ENCODE measurements at regions of chr10 and their contacts with region 1.

Region 1: GRCh38 chr10:59808896-59809643 is 55.8 kb upstream of the MRLN start:
- DNase-seq: peak; percentile 58 to 80 (median 70)
- H3K4me3 ChIP-seq: no peak overlapping the region
- H3K27ac ChIP-seq: no peak overlapping the region
- H3K4me1 ChIP-seq: peaks cover 0 to 3% (median 2%) of the 10 kb centered on the region in 3 donors
- H3K27me3 ChIP-seq: no peaks in the 10 kb centered on the region
- CTCF ChIP-seq: peak; percentile 71

Region 2: GRCh38 chr10:59625721-59626522 is 183.1 kb before region 1 on chr10:
- intact Hi-C with region 1: loop called (anchors 5 kb)
- DNase-seq: peak in 4 of 5 donors; percentile 58 to 88 (median 70)
- H3K4me3 ChIP-seq: no peak overlapping the region
- H3K27ac ChIP-seq: no peak overlapping the region
- H3K4me1 ChIP-seq: peaks cover 0 to 2% (median 0%) of the 10 kb centered on the region in 3 donors
- H3K27me3 ChIP-seq: no peaks in the 10 kb centered on the region
- CTCF ChIP-seq: peak; percentile 95

Measured in kidney (tissue), 22 donors.